Spleen (tissue), 13 donors: ENCODE measurements at regions of chr3 and their contacts with region 1.

Region 1: DNA sequence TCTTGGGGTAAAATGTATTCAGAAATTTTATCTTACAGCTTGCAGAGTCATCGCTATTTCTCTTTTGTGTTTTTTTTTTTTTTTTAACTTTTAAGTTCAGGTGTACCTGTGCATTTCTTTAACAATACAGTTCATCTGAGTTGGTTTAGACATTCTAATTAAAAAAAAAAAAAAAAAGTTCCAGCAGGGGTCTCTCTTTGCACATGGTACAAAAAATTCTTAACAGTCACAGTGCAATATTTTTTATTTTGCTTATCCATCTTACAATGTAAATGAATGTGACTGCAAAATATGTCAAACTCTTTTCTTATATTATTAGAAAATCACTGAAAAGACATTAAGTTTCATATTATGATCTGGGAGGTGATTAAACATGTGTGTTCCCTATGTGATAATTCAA is 47.5 kb upstream of the SLC9A9 start:
- DNase-seq: no peak
- H3K4me3 ChIP-seq: no peak overlapping the region
- H3K27ac ChIP-seq: no peak overlapping the region
- H3K4me1 ChIP-seq: no peaks in the 10 kb centered on the region
- H3K27me3 ChIP-seq: no peaks in the 10 kb centered on the region
- CTCF ChIP-seq: peak in 1 of 11 experiments; percentile 14
- POLR2A ChIP-seq: no peak

Region 2: DNA sequence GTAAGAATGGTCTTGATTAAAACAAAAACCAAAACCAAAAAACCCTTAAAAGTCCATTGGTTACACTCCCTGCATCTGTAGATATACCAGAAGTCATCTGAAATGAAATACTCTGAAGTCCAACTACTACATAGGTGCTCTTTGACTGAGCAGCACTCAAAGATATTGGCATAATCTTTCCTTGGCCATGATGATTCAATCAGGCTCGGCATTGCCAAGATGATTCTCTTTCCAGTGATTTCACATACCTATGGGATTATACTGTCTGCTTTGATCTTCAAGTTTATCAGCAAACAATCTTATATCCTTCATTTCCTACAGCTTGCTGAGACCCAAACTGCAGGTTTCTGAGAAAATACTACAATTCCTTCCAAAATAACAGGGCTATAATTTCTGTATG is 39.9 kb after region 1 on chr3:
- intact Hi-C with region 1: loop called (anchors 5 kb)
- DNase-seq: no peak
- H3K4me3 ChIP-seq: no peak overlapping the region
- H3K27ac ChIP-seq: no peak overlapping the region
- H3K4me1 ChIP-seq: no peaks in the 10 kb centered on the region
- H3K27me3 ChIP-seq: peaks cover 0 to 5% (median 0%) of the 10 kb centered on the region in 7 donors
- CTCF ChIP-seq: no peak
- POLR2A ChIP-seq: no peak

Region 3: DNA sequence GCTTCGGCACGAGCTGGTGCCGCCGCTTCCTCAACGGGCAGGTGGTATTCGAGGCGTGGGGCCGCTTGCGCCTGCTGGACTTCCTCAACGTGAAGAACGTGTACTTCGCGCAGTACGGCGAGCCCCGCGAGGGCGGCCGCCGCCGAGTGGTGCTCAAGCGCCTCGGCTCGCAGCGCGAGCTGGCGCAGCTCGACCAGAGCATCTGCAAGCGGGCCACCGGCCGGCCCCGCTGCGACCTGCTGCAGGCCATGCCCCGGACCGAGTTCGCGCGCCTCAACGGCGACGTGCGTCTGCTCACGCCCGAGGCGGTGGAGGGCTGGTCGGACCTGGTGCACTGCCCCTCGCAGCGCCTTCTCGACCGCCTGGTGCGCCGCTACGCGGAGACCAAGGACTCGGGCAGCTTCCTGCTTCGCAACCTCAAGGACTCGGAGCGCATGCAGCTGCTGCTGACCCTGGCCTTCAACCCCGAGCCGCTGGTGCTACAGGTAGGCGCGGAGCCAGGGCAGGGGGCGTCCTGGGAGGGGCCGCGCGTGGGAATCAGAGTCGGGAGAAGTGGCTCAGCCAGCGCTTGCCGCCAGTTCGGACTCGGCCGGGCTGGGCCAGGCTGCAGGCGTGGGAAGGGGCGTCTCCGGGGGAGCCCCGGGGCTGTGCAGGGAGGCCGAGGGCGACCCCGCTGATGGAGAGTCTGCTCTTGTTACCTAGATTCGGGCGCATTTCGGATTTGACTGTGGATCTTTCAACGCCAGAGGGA is 76.9 kb after region 1 on chr3:
- intact Hi-C with region 1: no loop called
- DNase-seq: peak; percentile 97
- H3K4me3 ChIP-seq: peak overlapping the region; percentile 67 to 99 (median 94)
- H3K27ac ChIP-seq: peak overlapping the region; percentile 95 to 99 (median 98)
- H3K4me1 ChIP-seq: peaks cover 28 to 56% (median 49%) of the 10 kb centered on the region in 6 donors
- H3K27me3 ChIP-seq: no peaks in the 10 kb centered on the region
- CTCF ChIP-seq: peak in 9 of 11 experiments; percentile 13 to 69 (median 51)
- POLR2A ChIP-seq: no peak

Region 4: GRCh38 chr3:144175644-144176425 is 280.0 kb after region 1 on chr3:
- intact Hi-C with region 1: no loop called
- DNase-seq: no peak
- H3K4me3 ChIP-seq: no peak overlapping the region
- H3K27ac ChIP-seq: no peak overlapping the region
- H3K4me1 ChIP-seq: no peaks in the 10 kb centered on the region
- H3K27me3 ChIP-seq: no peaks in the 10 kb centered on the region
- CTCF ChIP-seq: no peak
- POLR2A ChIP-seq: no peak